ENCODE measurements at regions of chr2 and their contacts with region 1.

Region 1: DNA sequence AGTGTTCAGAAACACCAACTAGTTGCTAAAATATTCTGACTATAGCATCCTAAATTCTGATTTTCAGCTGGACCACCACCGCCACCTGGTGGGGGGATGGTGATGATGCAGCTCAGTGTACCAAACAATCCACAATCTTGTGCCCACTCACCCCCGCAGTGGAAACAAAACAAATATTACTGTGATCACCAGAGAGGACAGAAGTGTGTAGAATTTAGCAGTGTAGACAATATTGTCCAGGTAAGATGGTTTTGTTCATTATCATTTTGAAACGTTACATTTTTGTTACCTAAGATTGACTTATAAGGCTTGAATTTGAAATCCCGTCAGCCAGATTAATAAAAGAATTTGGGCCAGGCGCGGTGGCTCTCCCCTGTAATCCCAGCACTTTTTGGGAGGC is 31.7 kb upstream of the UBXN4 start:
- DNase-seq: peak; percentile 56
- H3K4me3 ChIP-seq: no peak overlapping the region
- H3K27ac ChIP-seq: no peak overlapping the region
- H3K4me1 ChIP-seq: no peaks in the 10 kb centered on the region
- H3K27me3 ChIP-seq: no peaks in the 10 kb centered on the region
- CTCF ChIP-seq: peak; percentile 97

Region 2: GRCh38 chr2:135004005-135004746 is 705.8 kb before region 1 on chr2:
- intact Hi-C with region 1: loop called (anchors 2 kb)
- DNase-seq: peak; percentile 73
- H3K4me3 ChIP-seq: no peak overlapping the region
- H3K27ac ChIP-seq: no peak overlapping the region
- H3K4me1 ChIP-seq: no peaks in the 10 kb centered on the region
- H3K27me3 ChIP-seq: no peaks in the 10 kb centered on the region
- CTCF ChIP-seq: peak; percentile 82

Region 3: GRCh38 chr2:135456431-135456830 is 253.6 kb before region 1 on chr2:
- intact Hi-C with region 1: no loop called
- DNase-seq: no peak
- H3K4me3 ChIP-seq: no peak overlapping the region
- H3K27ac ChIP-seq: no peak overlapping the region
- H3K4me1 ChIP-seq: no peaks in the 10 kb centered on the region
- H3K27me3 ChIP-seq: no peaks in the 10 kb centered on the region
- CTCF ChIP-seq: no peak

Region 4: DNA sequence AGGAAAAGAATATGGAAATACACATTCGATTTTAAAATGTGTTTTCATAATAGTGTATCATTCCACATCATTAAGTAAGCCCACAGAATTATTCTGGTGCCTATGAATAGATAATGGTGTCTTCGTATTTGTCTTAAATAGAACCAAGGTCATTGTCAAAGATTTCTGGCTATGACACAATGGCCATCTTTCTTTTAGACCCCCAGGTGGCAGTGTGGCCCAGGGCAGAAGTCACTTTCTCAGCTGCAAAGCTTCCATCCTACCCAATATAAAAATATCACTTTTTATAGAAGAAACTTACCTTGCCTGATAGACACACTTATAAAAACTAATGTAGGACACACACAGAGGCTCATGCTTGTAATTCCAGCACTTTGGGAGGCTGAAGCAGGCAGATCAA is 236.4 kb before region 1 on chr2:
- intact Hi-C with region 1: loop called (anchors 5 kb)
- DNase-seq: no peak
- H3K4me3 ChIP-seq: no peak overlapping the region
- H3K27ac ChIP-seq: no peak overlapping the region
- H3K4me1 ChIP-seq: no peaks in the 10 kb centered on the region
- H3K27me3 ChIP-seq: no peaks in the 10 kb centered on the region
- CTCF ChIP-seq: no peak

Measured in colonic mucosa (tissue), 4 donors.